Activated naive CD4-positive, alpha-beta T cell treated with anti-CD3 and anti-CD28 coated beads for 36 hours (primary cell): ENCODE measurements at regions of chr7 and their contacts with region 1.

Region 1: DNA sequence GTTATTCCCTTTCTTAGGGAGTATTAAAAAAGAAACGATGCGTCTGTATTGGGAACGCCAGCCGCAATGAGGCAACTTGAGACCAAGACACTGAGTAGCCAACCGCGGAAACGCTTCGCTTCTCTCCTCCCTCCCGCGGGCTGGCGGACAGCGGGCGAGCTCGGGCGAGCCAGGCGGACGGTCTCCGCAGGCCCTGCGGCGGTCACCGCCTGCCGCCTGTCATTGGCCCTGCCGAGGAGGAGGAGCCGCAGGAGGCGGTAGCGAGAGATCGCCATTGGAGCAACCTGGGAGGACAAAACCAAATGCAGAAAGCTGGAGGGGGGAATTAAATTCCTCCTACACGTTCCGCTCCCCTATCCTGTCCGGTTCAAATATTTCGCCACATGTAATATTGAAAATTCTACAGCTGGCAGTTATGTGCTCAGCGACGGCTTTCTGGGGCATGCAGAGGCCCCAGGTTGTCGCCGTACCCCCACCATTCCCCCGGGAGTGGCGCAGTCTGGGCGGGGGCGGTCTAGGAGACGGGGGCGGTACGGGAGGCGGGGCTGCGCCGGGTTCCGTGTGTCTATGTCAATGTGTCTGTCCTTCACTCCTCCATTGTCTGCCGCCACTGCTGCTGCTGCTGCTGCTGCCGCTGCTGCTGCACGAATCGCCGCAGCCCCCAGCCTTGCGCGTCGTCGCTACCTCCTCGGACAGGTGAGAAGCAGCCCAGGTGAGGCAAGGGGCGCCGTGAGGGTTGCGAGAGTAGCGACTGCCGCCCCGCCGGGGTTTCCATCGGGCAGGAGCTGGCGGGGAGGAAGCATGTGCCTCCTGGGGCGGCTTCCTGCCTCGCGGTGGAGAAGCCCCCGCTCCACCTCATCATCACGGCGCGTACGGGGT is at the starts of genes ANKMY2 and BZW2:
- DNase-seq: peak; percentile 94
- H3K4me3 Mint-ChIP-seq: peak within 1 kb of the TSS; percentile 97
- H3K27ac Mint-ChIP-seq: peak within 1 kb of the TSS; percentile 95
- H3K4me1 Mint-ChIP-seq: peaks cover 53% of the 10 kb centered on the region
- H3K27me3 Mint-ChIP-seq: no peaks in the 10 kb centered on the region
- total RNA-seq, gene ANKMY2: 4.6 to 4.7 TPM
- total RNA-seq, gene BZW2: 118 to 122 TPM

Region 2: GRCh38 chr7:15985587-15986384 is 660.0 kb before region 1 on chr7:
- CTCF ChIA-PET with region 1: no interaction called
- intact Hi-C with region 1: no loop called
- DNase-seq: no peak
- H3K4me3 Mint-ChIP-seq: no peak overlapping the region
- H3K27ac Mint-ChIP-seq: no peak overlapping the region
- H3K4me1 Mint-ChIP-seq: no peaks in the 10 kb centered on the region
- H3K27me3 Mint-ChIP-seq: no peaks in the 10 kb centered on the region

Region 3: GRCh38 chr7:16619979-16620408 is 25.8 kb before region 1 on chr7:
- CTCF ChIA-PET with region 1: interaction called, 4 read pairs
- intact Hi-C with region 1: loop called (anchors 1 kb)
- DNase-seq: peak; percentile 33
- H3K4me3 Mint-ChIP-seq: peak overlapping the region; percentile 23
- H3K27ac Mint-ChIP-seq: peak overlapping the region; percentile 81
- H3K4me1 Mint-ChIP-seq: peaks cover 13% of the 10 kb centered on the region
- H3K27me3 Mint-ChIP-seq: no peaks in the 10 kb centered on the region

Region 4: DNA sequence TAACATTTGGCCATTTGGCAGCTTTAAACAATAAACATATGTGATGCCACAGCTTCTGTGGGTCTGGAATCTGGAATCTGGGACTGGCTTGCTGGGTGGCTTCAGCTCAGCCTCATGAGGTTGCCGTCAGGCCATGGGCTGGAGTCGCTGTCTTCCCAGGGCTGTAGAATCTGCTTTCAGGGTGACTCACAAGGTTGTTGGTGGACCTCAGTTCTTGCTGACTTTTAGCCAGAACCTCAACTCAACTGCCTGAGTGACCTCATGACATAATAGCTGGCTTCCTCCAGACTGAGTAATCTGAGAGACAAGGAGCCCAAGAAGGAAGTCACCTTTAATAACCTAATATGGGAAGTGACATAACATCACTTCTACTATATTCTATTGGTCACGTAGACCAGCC is 63.1 kb after region 1 on chr7:
- CTCF ChIA-PET with region 1: no interaction called
- intact Hi-C with region 1: loop called (anchors 2 kb)
- DNase-seq: no peak
- H3K4me3 Mint-ChIP-seq: no peak overlapping the region
- H3K27ac Mint-ChIP-seq: no peak overlapping the region
- H3K4me1 Mint-ChIP-seq: peaks cover 25% of the 10 kb centered on the region
- H3K27me3 Mint-ChIP-seq: no peaks in the 10 kb centered on the region

Region 5: DNA sequence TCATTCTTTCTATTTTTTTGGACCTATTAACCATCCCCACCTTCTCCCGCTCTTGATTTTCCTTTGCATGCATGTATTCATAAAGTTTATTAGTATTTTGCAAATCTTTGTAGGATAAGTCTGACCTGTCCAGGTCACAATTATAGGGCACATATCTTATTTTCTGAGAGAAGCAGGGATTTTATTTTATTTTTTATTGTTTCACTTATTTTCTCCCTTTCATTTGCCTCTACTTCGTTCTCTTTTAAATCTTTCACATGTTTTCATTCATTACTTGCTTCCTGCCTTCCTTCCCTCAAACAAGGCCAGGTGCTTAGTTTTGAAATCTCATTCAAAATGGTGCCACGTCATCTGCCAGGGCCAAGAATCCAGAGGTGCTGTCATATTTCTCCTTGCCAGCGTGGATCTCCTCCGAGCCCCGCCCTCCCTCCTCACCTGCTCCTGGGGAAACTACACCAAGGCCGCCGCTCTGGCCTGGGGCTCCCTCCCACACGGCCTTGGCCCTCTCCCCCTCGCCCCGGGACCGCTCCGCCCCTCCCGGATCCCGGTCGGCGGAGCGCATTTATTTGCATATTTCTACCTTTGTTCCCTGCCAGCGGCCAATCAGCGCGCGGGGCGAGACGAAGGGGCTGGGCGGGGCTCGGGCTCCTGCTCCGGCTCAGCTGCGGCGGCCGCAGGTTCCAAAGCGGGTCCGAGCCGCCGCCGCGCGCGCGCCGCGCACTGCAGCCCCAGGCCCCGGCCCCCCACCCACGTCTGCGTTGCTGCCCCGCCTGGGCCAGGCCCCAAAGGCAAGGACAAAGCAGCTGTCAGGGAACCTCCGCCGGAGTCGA is 107.5 kb after region 1 on chr7 and contains the start of gene TSPAN13:
- CTCF ChIA-PET with region 1: no interaction called
- intact Hi-C with region 1: loop called (anchors 1 kb)
- DNase-seq: peak; percentile 71
- H3K4me3 Mint-ChIP-seq: peak within 1 kb of the TSS; percentile 76
- H3K27ac Mint-ChIP-seq: no peak within 1 kb of the TSS
- H3K4me1 Mint-ChIP-seq: peaks cover 10% of the 10 kb centered on the region
- H3K27me3 Mint-ChIP-seq: peaks cover 31% of the 10 kb centered on the region
- total RNA-seq, gene TSPAN13: 0.35 to 0.52 TPM

Region 6: GRCh38 chr7:16905300-16906044 is 259.6 kb after region 1 on chr7:
- CTCF ChIA-PET with region 1: no interaction called
- intact Hi-C with region 1: no loop called
- DNase-seq: no peak
- H3K4me3 Mint-ChIP-seq: no peak overlapping the region
- H3K27ac Mint-ChIP-seq: no peak overlapping the region
- H3K4me1 Mint-ChIP-seq: no peaks in the 10 kb centered on the region
- H3K27me3 Mint-ChIP-seq: peaks cover 8% of the 10 kb centered on the region

Region 7: DNA sequence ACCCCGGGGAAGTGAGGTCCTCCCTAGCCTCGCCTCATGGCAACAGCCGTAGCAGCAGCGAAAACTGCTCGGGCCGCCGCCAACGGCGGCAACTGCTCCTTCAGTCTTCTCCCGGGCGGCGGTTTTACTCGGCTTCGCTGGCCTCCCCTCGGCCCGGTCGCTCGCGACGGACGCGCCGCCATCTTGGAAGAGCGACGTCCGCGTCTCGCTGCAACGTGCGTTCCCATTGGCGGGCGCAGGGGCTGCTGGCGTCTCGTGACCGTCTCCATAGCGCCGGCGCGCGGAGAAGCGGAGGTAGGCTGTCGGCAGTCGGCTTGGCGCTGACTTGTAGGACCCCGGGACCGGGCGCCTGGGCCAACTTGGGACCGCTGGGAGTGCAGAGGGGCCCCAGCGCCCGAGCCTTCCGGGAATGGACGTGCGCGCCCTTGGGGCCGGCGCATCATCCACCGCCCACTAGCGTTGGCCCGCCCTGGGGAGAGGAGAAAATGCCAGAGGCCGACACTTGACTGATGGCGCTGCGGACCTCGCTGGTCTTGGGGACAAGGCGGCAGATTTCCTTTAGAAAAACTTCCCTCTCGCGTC is 1294.6 kb after region 1 on chr7 and contains the start of gene SNX13:
- CTCF ChIA-PET with region 1: no interaction called
- intact Hi-C with region 1: loop called (anchors 1 kb)
- DNase-seq: peak; percentile 91
- H3K4me3 Mint-ChIP-seq: peak within 1 kb of the TSS; percentile 99
- H3K27ac Mint-ChIP-seq: peak within 1 kb of the TSS; percentile 92
- H3K4me1 Mint-ChIP-seq: peaks cover 41% of the 10 kb centered on the region
- H3K27me3 Mint-ChIP-seq: no peaks in the 10 kb centered on the region
- total RNA-seq, gene SNX13: 19.5 to 20.3 TPM